Activated CD4-positive, alpha-beta memory T cell treated with anti-CD3 and anti-CD28 coated beads for 36 hours (primary cell): ENCODE measurements at regions of chr9 and their contacts with region 1.

Region 1: GRCh38 chr9:93064392-93065134 is 6.1 kb downstream of the SUSD3 start:
- DNase-seq: peak; percentile 95
- H3K4me3 Mint-ChIP-seq: peak overlapping the region; percentile 87
- H3K27ac Mint-ChIP-seq: peak overlapping the region; percentile 99
- H3K4me1 Mint-ChIP-seq: peaks cover 89% of the 10 kb centered on the region
- H3K27me3 Mint-ChIP-seq: no peaks in the 10 kb centered on the region

Region 2: DNA sequence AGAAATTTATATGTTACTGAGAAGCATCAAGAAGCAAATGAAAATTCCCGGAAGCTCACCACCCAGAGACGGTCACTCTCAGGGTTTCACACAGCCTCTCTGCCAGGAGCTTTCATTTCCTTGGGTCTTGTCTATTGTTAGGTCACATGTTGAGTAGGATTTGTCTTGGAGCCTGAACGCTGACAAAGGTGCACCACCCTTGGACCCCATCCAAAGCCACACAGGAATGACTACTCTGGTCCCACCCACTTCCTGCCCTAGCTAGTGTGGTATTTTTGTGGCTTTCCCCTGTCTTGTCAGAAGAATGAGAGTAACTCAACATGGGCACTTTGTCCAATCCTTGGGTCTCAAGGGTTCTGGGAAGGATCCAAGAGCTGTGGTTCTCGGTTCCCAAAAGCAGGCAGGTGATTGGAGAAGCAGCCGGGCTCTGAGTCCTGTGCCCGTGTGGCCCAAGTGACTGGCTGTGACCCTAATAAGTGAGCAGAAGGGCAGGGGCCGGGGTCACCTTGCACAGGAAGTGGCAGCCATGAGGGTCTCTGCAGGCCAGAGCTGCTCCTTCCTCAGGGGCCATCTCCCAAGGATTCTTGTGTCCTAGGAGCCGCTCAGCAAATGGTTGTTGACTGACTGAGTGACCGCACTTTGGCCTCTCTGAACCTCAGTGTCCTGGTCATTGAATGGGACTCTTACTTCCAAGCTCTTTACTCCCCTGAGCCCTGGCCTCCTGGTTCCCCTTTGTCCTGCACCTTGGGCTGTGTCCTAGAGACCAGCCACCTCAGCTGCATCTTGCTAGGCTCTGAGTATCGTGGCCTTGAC is 110.3 kb before region 1 on chr9:
- CTCF ChIA-PET with region 1: interaction called, 6 read pairs
- POLR2A ChIA-PET with region 1: interaction called, 3 read pairs
- intact Hi-C with region 1: loop called (anchors 2 kb)
- DNase-seq: peak; percentile 94
- H3K4me3 Mint-ChIP-seq: peak overlapping the region; percentile 64
- H3K27ac Mint-ChIP-seq: peak overlapping the region; percentile 96
- H3K4me1 Mint-ChIP-seq: peaks cover 74% of the 10 kb centered on the region
- H3K27me3 Mint-ChIP-seq: no peaks in the 10 kb centered on the region

Region 3: DNA sequence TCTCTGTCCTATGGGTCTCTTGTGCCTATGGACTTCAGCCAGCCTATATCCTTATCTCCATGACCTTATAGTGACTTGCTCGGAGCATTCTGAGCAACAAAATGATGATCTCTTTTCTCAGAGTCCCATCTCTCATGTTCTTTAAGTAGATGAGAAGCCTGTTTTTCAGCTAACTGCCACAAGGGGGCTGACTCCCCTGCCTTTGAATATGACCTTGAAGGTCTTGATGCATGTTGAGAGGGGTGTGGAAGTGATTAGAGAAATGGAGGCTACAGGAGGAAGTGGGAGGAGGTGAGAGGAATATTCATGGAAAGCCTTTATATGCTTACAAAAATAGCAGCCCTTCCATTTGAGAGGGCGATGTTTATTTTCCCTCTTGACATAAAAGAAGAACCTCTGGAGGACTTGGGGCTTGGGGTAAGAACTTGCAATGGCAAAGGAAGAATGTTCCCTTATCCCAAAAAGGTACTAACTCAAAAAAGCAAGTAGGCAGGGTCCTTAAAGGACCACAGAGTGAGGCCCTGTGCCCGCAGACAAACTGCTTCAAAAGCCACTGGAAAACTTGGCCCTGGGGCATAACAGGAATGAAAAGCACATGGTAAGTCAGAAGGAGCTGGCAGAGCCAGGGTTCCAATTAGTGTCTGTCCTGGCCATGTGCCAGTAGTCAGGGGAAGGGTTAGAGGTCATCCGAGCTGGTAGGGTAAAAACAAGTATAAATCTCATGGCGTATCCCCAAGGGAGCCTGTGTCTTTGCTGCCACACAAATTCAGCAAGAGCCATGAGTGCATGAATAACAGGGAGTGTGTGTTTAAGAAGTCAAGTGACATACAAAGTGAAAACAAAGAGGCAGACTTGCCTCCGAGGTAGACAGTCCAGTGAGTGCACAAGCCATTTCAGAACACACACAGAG is 78.1 kb before region 1 on chr9:
- CTCF ChIA-PET with region 1: interaction called, 6 read pairs
- POLR2A ChIA-PET with region 1: no interaction called
- intact Hi-C with region 1: loop called (anchors 1 kb)
- DNase-seq: peak; percentile 72
- H3K4me3 Mint-ChIP-seq: no peak overlapping the region
- H3K27ac Mint-ChIP-seq: peak overlapping the region; percentile 78
- H3K4me1 Mint-ChIP-seq: peaks cover 76% of the 10 kb centered on the region
- H3K27me3 Mint-ChIP-seq: no peaks in the 10 kb centered on the region

Region 4: GRCh38 chr9:93037476-93037971 is 27.0 kb before region 1 on chr9:
- CTCF ChIA-PET with region 1: no interaction called
- POLR2A ChIA-PET with region 1: no interaction called
- intact Hi-C with region 1: no loop called
- DNase-seq: no peak
- H3K4me3 Mint-ChIP-seq: no peak overlapping the region
- H3K27ac Mint-ChIP-seq: peak overlapping the region; percentile 8
- H3K4me1 Mint-ChIP-seq: peaks cover 40% of the 10 kb centered on the region
- H3K27me3 Mint-ChIP-seq: no peaks in the 10 kb centered on the region

Region 5: DNA sequence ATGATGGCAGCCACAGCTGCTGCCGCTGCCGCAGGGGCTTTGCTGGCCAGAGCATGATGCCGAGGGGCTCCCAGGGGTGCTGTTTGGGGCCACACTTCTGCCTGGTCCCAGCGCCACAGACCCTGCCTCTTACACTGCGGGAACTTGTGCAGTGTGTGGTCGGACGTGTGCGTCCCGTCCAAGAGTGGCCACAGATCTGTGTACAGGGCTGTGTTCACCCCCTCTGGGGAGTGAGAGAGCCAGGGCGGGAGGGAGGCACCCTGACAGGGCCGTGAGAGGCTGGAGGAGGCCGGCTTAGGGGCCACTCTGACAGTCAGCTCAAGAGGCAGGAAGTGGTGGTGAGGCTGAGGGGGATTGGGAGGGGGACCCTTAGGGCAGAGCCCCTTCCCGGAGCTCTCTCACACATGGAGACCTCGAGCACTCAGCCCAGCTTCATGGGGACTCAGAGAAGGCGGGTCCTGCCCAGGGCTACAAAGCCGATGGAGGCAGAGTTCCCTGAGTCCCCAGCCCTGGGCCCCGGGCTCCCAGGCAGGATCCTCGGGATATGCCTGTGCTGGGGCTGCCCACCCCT is 18.4 kb after region 1 on chr9:
- CTCF ChIA-PET with region 1: interaction called, 5 read pairs
- POLR2A ChIA-PET with region 1: interaction called, 12 read pairs
- intact Hi-C with region 1: loop called (anchors 1 kb)
- DNase-seq: peak; percentile 45
- H3K4me3 Mint-ChIP-seq: no peak overlapping the region
- H3K27ac Mint-ChIP-seq: peak overlapping the region; percentile 98
- H3K4me1 Mint-ChIP-seq: peaks cover 42% of the 10 kb centered on the region
- H3K27me3 Mint-ChIP-seq: no peaks in the 10 kb centered on the region

Region 6: GRCh38 chr9:93134015-93134739 is 69.6 kb after region 1 on chr9 and contains the start of gene NINJ1:
- CTCF ChIA-PET with region 1: interaction called, 6 read pairs
- POLR2A ChIA-PET with region 1: interaction called, 6 read pairs
- intact Hi-C with region 1: loop called (anchors 2 kb)
- DNase-seq: peak; percentile 94
- H3K4me3 Mint-ChIP-seq: peak within 1 kb of the TSS; percentile 94
- H3K27ac Mint-ChIP-seq: peak within 1 kb of the TSS; percentile 89
- H3K4me1 Mint-ChIP-seq: peaks cover 60% of the 10 kb centered on the region
- H3K27me3 Mint-ChIP-seq: no peaks in the 10 kb centered on the region
- total RNA-seq, gene NINJ1: 77.9 to 82.0 TPM

Region 7: GRCh38 chr9:93415176-93415690 is 350.7 kb after region 1 on chr9:
- CTCF ChIA-PET with region 1: no interaction called
- POLR2A ChIA-PET with region 1: no interaction called
- intact Hi-C with region 1: no loop called
- DNase-seq: no peak
- H3K4me3 Mint-ChIP-seq: no peak overlapping the region
- H3K27ac Mint-ChIP-seq: no peak overlapping the region
- H3K4me1 Mint-ChIP-seq: no peaks in the 10 kb centered on the region
- H3K27me3 Mint-ChIP-seq: peaks cover 21% of the 10 kb centered on the region